ENCODE measurements at regions of chr1 and their contacts with region 1.

Region 1: GRCh38 chr1:215710036-215710898 is 143.2 kb downstream of the KCTD3 start:
- DNase-seq: no peak
- H3K4me3 ChIP-seq: no peak overlapping the region
- H3K27ac ChIP-seq: no peak overlapping the region
- H3K4me1 ChIP-seq: no peaks in the 10 kb centered on the region
- H3K27me3 ChIP-seq: no peaks in the 10 kb centered on the region
- CTCF ChIP-seq: no peak
- EP300 ChIP-seq: no peak
- POLR2A ChIP-seq: no peak

Region 2: DNA sequence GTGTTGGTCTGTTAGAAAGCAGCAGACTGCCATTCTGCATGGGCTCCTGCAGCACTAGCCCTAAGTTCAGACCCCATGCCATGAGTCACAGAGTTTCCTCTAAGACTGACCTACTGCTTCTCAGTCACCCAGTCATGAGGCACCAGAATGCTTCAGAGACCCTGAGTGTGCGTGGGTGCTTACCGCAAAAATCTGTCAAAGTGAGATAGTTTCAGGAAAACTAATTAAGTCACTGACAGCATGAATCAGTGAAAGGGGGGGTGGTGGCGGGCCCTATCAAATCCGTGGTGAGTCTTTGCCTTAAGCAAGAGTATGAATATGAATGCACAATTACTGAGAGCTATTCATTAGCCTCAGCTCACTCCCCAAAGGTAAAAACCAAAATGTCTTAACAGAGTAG is 45.1 kb before region 1 on chr1:
- intact Hi-C with region 1: loop called in 1 of 4 experiments (anchors 1 kb)
- DNase-seq: no peak
- H3K4me3 ChIP-seq: no peak overlapping the region
- H3K27ac ChIP-seq: no peak overlapping the region
- H3K4me1 ChIP-seq: no peaks in the 10 kb centered on the region
- H3K27me3 ChIP-seq: no peaks in the 10 kb centered on the region
- CTCF ChIP-seq: no peak
- EP300 ChIP-seq: no peak
- POLR2A ChIP-seq: no peak

Region 3: GRCh38 chr1:215793180-215793579 is 82.9 kb after region 1 on chr1:
- intact Hi-C with region 1: no loop called
- DNase-seq: no peak
- H3K4me3 ChIP-seq: no peak overlapping the region
- H3K27ac ChIP-seq: no peak overlapping the region
- H3K4me1 ChIP-seq: no peaks in the 10 kb centered on the region
- H3K27me3 ChIP-seq: no peaks in the 10 kb centered on the region
- CTCF ChIP-seq: no peak
- EP300 ChIP-seq: no peak
- POLR2A ChIP-seq: no peak

Measured in ovary (tissue), 10 donors.